Right lobe of liver (tissue), 6 donors: ENCODE measurements at regions of chr3 and their contacts with region 1.

Region 1: GRCh38 chr3:52339612-52340011 is 23.5 kb downstream of the DNAH1 start:
- DNase-seq: peak in 1 of 3 donors; percentile 37
- ATAC-seq: peak; percentile 86 to 95 (median 91)
- H3K4me3 ChIP-seq: no peak overlapping the region
- H3K27ac ChIP-seq: no peak overlapping the region
- H3K4me1 ChIP-seq: no peaks in the 10 kb centered on the region
- H3K27me3 ChIP-seq: no peaks in the 10 kb centered on the region
- CTCF ChIP-seq: peak; percentile 62 to 68 (median 62)
- POLR2A ChIP-seq: no peak

Region 2: GRCh38 chr3:52070724-52071621 is 268.6 kb before region 1 on chr3:
- intact Hi-C with region 1: no loop called
- DNase-seq: no peak
- ATAC-seq: peak in 3 of 4 donors; percentile 9 to 29 (median 19)
- H3K4me3 ChIP-seq: no peak overlapping the region
- H3K27ac ChIP-seq: no peak overlapping the region
- H3K4me1 ChIP-seq: no peaks in the 10 kb centered on the region
- H3K27me3 ChIP-seq: no peaks in the 10 kb centered on the region
- CTCF ChIP-seq: no peak
- POLR2A ChIP-seq: no peak

Region 3: DNA sequence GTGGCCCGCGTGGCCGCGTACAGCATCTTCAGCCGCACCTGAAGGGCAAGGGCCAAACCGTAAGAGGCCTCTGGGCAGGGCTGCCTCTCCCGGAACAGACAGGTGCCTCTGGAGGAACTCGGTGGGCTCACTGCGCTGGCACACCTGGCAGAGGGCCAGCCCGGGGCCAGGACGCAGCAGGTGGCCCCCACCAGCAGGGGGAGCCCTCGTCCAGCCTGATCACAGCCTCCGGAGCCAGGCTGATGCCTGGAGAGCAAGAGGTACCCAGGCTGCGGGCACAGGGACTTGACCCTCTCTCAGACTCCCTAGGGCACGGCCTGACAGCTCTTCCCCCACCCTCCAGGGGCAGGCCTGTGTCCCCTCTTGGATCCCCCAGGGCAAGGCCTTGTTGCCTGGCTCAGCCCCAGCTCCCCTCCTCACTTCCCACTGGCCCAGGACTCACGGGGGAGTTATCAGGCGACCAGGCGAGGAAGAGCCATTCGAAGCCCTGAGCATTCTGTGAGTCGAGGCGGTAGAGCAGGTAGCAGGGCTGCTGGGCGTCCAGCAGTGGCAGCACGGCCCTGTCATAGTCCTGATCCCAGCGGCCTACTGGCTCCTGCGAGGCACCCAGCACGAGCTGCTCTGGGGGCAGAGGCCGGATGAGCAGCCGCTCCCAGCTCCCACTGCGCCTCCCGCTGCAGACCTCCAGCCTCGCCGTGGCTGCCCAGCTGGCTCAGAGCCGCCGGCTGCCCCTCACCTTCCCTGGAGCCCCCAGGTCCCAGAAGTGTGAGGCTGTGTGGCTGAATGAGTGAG is 107.9 kb before region 1 on chr3:
- intact Hi-C with region 1: loop called (anchors 5 kb)
- DNase-seq: peak; percentile 87 to 89 (median 88)
- ATAC-seq: peak; percentile 65 to 73 (median 66)
- H3K4me3 ChIP-seq: no peak overlapping the region
- H3K27ac ChIP-seq: no peak overlapping the region
- H3K4me1 ChIP-seq: peaks cover 0 to 39% (median 16%) of the 10 kb centered on the region in 4 donors
- H3K27me3 ChIP-seq: no peaks in the 10 kb centered on the region
- CTCF ChIP-seq: peak; percentile 96 to 99 (median 97)
- POLR2A ChIP-seq: no peak

Region 4: DNA sequence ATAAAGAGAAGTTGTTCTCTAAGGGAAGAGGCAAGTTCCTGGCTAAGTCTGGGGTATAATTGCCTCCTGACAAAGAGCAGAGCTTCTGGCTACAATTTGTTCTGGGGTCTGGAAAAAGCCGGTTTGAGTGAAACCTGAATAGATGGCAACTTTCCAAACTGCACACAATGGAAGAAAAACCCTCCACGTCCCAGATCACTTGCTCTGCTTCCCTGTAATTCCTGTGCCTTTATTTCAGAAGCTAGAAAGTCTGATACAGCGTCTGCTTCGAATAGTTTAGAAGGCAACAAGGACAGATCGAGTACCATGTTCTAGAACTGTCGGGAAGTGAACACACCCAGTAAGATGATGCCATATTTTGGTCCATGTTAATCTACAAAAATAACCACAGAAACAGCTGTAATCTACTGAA is 59.6 kb before region 1 on chr3:
- intact Hi-C with region 1: no loop called
- DNase-seq: no peak
- ATAC-seq: no peak
- H3K4me3 ChIP-seq: no peak overlapping the region
- H3K27ac ChIP-seq: peak overlapping the region; percentile 97
- H3K4me1 ChIP-seq: peaks cover 0 to 56% (median 17%) of the 10 kb centered on the region in 4 donors
- H3K27me3 ChIP-seq: no peaks in the 10 kb centered on the region
- CTCF ChIP-seq: no peak
- POLR2A ChIP-seq: no peak

Region 5: GRCh38 chr3:52291508-52292181 is 48.0 kb before region 1 on chr3:
- intact Hi-C with region 1: loop called in 1 of 2 experiments (anchors 5 kb)
- DNase-seq: peak in 1 of 3 donors; percentile 49
- ATAC-seq: peak in 1 of 4 donors; percentile 6
- H3K4me3 ChIP-seq: peak overlapping the region; percentile 50 to 97 (median 77)
- H3K27ac ChIP-seq: peak overlapping the region in 2 of 3 donors; percentile 73 to 100
- H3K4me1 ChIP-seq: peaks cover 0 to 63% (median 23%) of the 10 kb centered on the region in 4 donors
- H3K27me3 ChIP-seq: no peaks in the 10 kb centered on the region
- CTCF ChIP-seq: peak; percentile 39 to 51 (median 48)
- POLR2A ChIP-seq: no peak